H1 (cell line): ENCODE measurements at regions of chr19 and their contacts with region 1.

Region 1: DNA sequence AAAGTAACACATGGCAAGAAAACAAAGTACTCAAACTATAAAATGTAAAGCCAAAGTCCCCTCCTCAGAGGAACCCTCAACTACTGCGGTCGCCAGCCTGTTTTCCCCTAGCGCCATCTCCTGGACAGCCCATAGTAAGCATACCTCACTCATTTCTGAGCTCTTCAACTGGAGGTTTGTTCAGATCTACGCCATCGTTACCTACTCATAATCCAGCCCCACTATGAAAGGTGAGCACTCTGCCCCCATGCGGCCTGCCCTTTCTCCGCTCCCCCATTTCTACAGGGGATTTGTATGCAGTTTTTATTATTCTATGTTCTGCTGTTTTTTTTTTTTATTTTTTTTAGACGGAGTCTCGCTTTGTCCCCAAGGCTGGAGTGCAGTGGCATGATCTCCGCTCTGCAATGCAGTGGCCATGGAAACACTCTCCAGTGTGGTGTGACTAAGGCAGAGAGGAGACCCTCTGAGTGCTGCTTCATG is 26.2 kb downstream of the OPA3 start:
- DNase-seq: peak in 1 of 2 experiments; percentile 79
- H3K4me3 ChIP-seq: no peak overlapping the region
- H3K27ac ChIP-seq: no peak overlapping the region
- H3K4me1 ChIP-seq: peaks cover 0 to 6% (median 2%) of the 10 kb centered on the region in 4 experiments; a peak in 6 of 7 replicates
- H3K27me3 ChIP-seq: no peaks in the 10 kb centered on the region
- CTCF ChIP-seq: peak; percentile 70 to 92 (median 92)
- EP300 ChIP-seq: no peak
- POLR2A ChIP-seq: no peak
- RAD21 ChIP-seq: peak; percentile 77 to 83

Region 2: GRCh38 chr19:45419396-45419795 is 139.0 kb before region 1 on chr19:
- CTCF ChIA-PET with region 1: no interaction called
- POLR2A ChIA-PET with region 1: no interaction called
- DNase-seq: no peak
- H3K4me3 ChIP-seq: no peak overlapping the region
- H3K27ac ChIP-seq: no peak overlapping the region
- H3K4me1 ChIP-seq: peaks cover 0 to 8% (median 4%) of the 10 kb centered on the region in 4 experiments; a peak in 5 of 7 replicates
- H3K27me3 ChIP-seq: no peaks in the 10 kb centered on the region
- CTCF ChIP-seq: no peak
- EP300 ChIP-seq: no peak
- POLR2A ChIP-seq: no peak
- RAD21 ChIP-seq: no peak

Region 3: DNA sequence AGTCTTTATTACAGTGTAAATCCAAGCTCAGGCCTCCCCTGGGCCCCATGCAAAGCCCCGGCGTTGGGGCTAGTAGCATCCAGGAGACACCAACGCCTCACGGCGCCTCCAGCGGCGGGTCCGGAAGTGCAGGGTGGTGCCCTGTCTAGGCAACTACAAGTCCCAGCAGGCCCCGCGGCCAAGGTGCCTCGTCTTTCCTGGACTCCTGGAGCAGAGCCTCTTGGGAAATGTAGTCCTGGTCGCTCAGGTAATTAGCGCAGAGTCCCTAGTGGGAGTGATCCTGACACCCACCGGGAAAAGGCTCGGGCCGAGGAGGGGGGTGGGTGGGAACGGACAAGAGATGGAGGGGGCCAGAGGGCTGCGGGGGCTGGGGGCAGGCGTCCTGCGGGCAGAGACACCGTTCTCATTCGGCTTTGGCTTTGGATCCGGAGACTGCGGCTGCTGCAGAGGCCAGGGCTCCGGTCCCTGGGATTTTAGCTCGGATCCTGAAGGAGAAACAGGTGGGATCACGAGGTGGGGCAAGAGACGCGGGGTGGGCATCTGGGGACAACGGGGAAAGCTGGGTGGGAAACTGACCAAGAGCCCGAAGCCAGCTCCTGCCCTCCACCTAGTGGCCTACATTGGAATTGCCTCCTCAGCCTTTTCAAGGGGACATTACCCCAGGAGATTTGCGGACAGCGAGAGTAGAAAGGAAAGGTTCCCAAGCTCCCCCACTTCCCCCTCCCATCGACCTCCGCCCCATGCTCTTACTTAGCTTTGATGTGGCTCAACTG is 72.9 kb before region 1 on chr19:
- CTCF ChIA-PET with region 1: interaction called, 16 read pairs
- POLR2A ChIA-PET with region 1: no interaction called
- DNase-seq: peak in 1 of 2 experiments; percentile 100
- H3K4me3 ChIP-seq: peak overlapping the region; percentile 32 to 69 (median 52)
- H3K27ac ChIP-seq: no peak overlapping the region; the same call in 1 of the 2 replicates
- H3K4me1 ChIP-seq: peaks cover 0 to 3% (median 0%) of the 10 kb centered on the region in 4 experiments; a peak in 1 of 7 replicates
- H3K27me3 ChIP-seq: no peaks in the 10 kb centered on the region
- CTCF ChIP-seq: peak; percentile 86 to 95 (median 92)
- EP300 ChIP-seq: no peak
- POLR2A ChIP-seq: no peak
- RAD21 ChIP-seq: peak; percentile 59 to 66

Region 4: GRCh38 chr19:45506246-45506990 is 52.0 kb before region 1 on chr19:
- CTCF ChIA-PET with region 1: interaction called, 15 read pairs
- POLR2A ChIA-PET with region 1: interaction called, 6 read pairs
- DNase-seq: peak in 1 of 2 experiments; percentile 99
- H3K4me3 ChIP-seq: peak overlapping the region; percentile 72 to 97 (median 95)
- H3K27ac ChIP-seq: peak overlapping the region; percentile 44; the same call in 1 of the 2 replicates
- H3K4me1 ChIP-seq: peaks cover 7 to 14% (median 11%) of the 10 kb centered on the region in 4 experiments
- H3K27me3 ChIP-seq: no peaks in the 10 kb centered on the region
- CTCF ChIP-seq: peak; percentile 51 to 54 (median 53)
- EP300 ChIP-seq: no peak
- POLR2A ChIP-seq: peak; percentile 60 to 80
- RAD21 ChIP-seq: peak; percentile 35 to 51; a peak in 3 of 4 replicates

Region 5: DNA sequence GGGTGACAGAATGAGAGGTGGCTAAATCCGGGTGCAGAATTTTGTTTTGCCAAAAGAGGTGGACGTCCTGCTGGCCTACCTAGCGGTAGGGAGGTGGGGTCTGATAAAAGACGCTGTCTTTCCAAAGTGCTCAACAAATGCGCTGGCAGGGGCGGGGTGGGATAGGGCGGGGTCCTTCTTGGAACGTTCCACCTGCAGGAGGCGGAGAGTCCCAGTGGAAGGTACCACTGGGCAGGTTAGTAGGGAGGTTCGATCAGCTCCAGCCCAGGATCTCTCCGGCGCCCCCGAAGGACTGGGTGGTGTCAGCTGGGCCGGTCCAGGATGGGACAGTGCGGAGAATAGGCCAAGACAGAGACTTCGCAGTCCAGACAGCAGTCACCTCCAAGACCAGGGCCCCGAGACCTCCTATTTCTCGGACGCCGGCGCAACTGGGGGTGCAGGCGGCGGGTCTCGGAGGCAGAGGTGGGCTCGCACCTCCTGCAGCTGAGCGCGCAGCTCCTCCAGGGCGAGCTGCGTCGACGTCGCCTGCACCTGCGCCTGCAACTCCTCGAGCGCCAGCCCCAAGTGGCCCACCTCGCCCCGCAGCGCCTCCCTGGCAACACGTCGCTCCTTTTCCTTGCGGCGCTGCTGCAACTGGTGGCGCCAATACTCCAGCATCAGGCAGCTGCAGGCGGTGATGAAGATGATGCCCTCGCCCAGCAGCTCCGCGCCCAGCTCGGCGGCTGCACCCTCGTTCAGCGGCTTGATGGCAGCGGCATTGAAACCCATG is 29.6 kb before region 1 on chr19:
- CTCF ChIA-PET with region 1: interaction called, 22 read pairs
- POLR2A ChIA-PET with region 1: interaction called, 14 read pairs
- DNase-seq: peak; percentile 87 to 88
- H3K4me3 ChIP-seq: peak overlapping the region; percentile 50 to 68 (median 58)
- H3K27ac ChIP-seq: 0 out of 2 replicates have a peak overlapping the region, but pooled peaks have one; percentile 1
- H3K4me1 ChIP-seq: peaks cover 0 to 14% (median 9%) of the 10 kb centered on the region in 4 experiments; a peak in 5 of 7 replicates
- H3K27me3 ChIP-seq: peaks cover 0 to 5% (median under 1%) of the 10 kb centered on the region in 4 experiments; a peak in 4 of 7 replicates
- CTCF ChIP-seq: peak; percentile 7 to 26 (median 14)
- EP300 ChIP-seq: peak in 1 of 2 experiments; percentile 98; a peak in 2 of 3 replicates
- POLR2A ChIP-seq: peak in 1 of 2 experiments; percentile 85; a peak in 1 of 3 replicates
- RAD21 ChIP-seq: peak; percentile 23 to 42; a peak in 3 of 4 replicates

Region 6: GRCh38 chr19:45547976-45548609 is 10.3 kb before region 1 on chr19:
- CTCF ChIA-PET with region 1: interaction called, 37 read pairs
- POLR2A ChIA-PET with region 1: interaction called, 3 read pairs
- DNase-seq: no peak
- H3K4me3 ChIP-seq: no peak overlapping the region
- H3K27ac ChIP-seq: no peak overlapping the region
- H3K4me1 ChIP-seq: peaks cover 0 to 3% (median 0%) of the 10 kb centered on the region in 4 experiments; a peak in 2 of 7 replicates
- H3K27me3 ChIP-seq: no peaks in the 10 kb centered on the region
- CTCF ChIP-seq: no peak
- EP300 ChIP-seq: no peak
- POLR2A ChIP-seq: no peak
- RAD21 ChIP-seq: no peak

Region 7: DNA sequence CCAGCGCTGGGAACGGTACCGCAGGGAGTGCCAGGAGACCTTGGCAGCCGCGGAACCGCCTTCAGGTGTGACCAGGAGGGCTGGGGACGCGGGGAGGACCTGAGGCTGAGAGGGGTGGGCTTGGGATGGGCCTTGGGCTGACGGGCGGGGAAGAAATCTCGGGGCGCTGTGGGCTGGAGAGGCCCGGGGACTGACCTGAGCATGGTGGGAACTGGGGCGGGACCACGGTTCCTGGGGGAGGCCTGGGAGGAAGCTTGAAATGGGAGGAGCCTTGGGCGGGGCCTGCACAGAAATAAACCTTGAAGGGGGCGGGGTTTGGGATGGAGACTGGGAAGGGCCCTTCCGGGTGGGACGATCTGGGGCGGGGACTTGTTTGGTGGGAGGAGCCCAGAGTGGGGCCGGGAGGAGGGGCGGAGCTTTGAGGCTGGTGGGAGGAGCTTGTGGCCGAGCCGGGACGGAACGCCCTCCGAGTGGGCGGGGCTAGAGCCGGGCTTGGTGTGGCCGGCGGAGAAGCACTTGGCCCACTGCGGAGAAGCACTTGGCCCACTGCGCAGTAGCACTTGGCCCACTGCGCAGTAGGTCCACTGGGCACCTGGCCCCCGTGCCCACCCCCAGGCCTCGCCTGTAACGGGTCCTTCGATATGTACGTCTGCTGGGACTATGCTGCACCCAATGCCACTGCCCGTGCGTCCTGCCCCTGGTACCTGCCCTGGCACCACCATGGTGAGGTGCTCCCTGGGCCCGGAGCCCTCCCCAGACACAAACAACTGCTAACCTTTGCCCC is 112.4 kb after region 1 on chr19:
- CTCF ChIA-PET with region 1: no interaction called
- POLR2A ChIA-PET with region 1: no interaction called
- DNase-seq: peak; percentile 93 to 100
- H3K4me3 ChIP-seq: peak overlapping the region; percentile 37 to 69 (median 50)
- H3K27ac ChIP-seq: no peak overlapping the region
- H3K4me1 ChIP-seq: peaks cover 9 to 14% (median 10%) of the 10 kb centered on the region in 4 experiments
- H3K27me3 ChIP-seq: peaks cover 18 to 31% (median 27%) of the 10 kb centered on the region in 4 experiments
- CTCF ChIP-seq: no peak
- EP300 ChIP-seq: no peak
- POLR2A ChIP-seq: no peak
- RAD21 ChIP-seq: no peak

Region 8: GRCh38 chr19:45792470-45793177 is 234.2 kb after region 1 on chr19 and contains the start of gene DMWD:
- CTCF ChIA-PET with region 1: no interaction called
- POLR2A ChIA-PET with region 1: no interaction called
- DNase-seq: peak; percentile 97 to 100
- H3K4me3 ChIP-seq: peak within 1 kb of the TSS; percentile 67 to 100 (median 86)
- H3K27ac ChIP-seq: peak within 1 kb of the TSS; percentile 83; the same call in 1 of the 2 replicates
- H3K4me1 ChIP-seq: peaks cover 0 to 6% (median 4%) of the 10 kb centered on the region in 4 experiments; a peak in 3 of 7 replicates
- H3K27me3 ChIP-seq: no peaks in the 10 kb centered on the region
- CTCF ChIP-seq: no peak
- EP300 ChIP-seq: no peak
- POLR2A ChIP-seq: peak in 1 of 2 experiments; percentile 80; a peak in 1 of 3 replicates
- RAD21 ChIP-seq: no peak
- total RNA-seq, gene DMWD: 41.0 and 41.6 TPM in 2 replicates